AG04450 (cell line): ENCODE measurements at regions of chr4 and their contacts with region 1.

Region 1: GRCh38 chr4:6327041-6327917 is 57.6 kb downstream of the WFS1 start:
- DNase-seq: peak; percentile 27
- H3K4me3 ChIP-seq: no peak overlapping the region
- H3K27ac ChIP-seq: no peak overlapping the region
- H3K27me3 ChIP-seq: peaks cover 20% of the 10 kb centered on the region
- CTCF ChIP-seq: peak; percentile 91

Region 2: GRCh38 chr4:6269616-6270511 is 57.4 kb before region 1 on chr4 and contains the start of gene WFS1:
- CTCF ChIA-PET with region 1: interaction called, 310 read pairs
- POLR2A ChIA-PET with region 1: no interaction called
- DNase-seq: peak; percentile 95
- H3K4me3 ChIP-seq: peak within 1 kb of the TSS; percentile 82
- H3K27ac ChIP-seq: no peak within 1 kb of the TSS
- H3K27me3 ChIP-seq: peaks cover 11% of the 10 kb centered on the region
- CTCF ChIP-seq: no peak
- polyA plus RNA-seq, gene WFS1: 46.8 and 64.6 TPM in 2 replicates

Region 3: DNA sequence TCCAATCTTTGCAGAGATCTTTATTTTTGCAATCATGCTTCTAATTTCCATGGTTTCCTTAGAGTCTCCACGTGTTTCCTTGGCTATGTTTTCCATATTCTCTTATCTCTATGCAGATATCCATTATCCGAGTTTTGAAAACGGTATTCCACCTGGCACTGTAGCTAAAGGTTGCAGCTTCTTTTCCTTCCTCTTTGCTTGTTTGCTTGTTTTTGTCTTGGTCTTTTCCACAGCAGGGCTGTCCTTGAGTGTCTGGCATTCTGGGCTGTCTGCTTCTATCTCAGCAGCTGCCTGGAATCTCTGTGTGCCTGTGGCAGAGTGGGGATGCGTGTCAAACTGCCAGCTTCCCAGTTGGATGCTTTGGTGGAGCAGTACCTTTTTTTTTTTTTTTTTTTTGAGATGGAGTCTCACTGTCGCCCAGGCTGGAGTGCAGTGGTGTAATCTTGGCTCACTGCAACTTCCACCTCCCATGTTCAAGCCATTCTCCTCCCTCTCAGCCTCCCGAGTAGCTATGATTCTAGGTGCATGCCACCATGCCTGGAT is 10.7 kb before region 1 on chr4:
- CTCF ChIA-PET with region 1: interaction called, 16 read pairs
- POLR2A ChIA-PET with region 1: no interaction called
- DNase-seq: no peak
- H3K4me3 ChIP-seq: no peak overlapping the region
- H3K27ac ChIP-seq: no peak overlapping the region
- H3K27me3 ChIP-seq: peaks cover 20% of the 10 kb centered on the region
- CTCF ChIP-seq: no peak

Region 4: GRCh38 chr4:6343950-6344408 is 16.7 kb after region 1 on chr4:
- CTCF ChIA-PET with region 1: interaction called, 50 read pairs
- POLR2A ChIA-PET with region 1: no interaction called
- DNase-seq: peak; percentile 18
- H3K4me3 ChIP-seq: no peak overlapping the region
- H3K27ac ChIP-seq: no peak overlapping the region
- H3K27me3 ChIP-seq: peaks cover 3% of the 10 kb centered on the region
- CTCF ChIP-seq: no peak

Region 5: GRCh38 chr4:6354119-6354518 is 26.8 kb after region 1 on chr4:
- CTCF ChIA-PET with region 1: no interaction called
- POLR2A ChIA-PET with region 1: no interaction called
- DNase-seq: no peak
- H3K4me3 ChIP-seq: no peak overlapping the region
- H3K27ac ChIP-seq: no peak overlapping the region
- H3K27me3 ChIP-seq: no peaks in the 10 kb centered on the region
- CTCF ChIP-seq: no peak

Region 6: GRCh38 chr4:6546681-6547447 is 219.6 kb after region 1 on chr4:
- CTCF ChIA-PET with region 1: interaction called, 17 read pairs
- POLR2A ChIA-PET with region 1: no interaction called
- DNase-seq: peak; percentile 33
- H3K4me3 ChIP-seq: no peak overlapping the region
- H3K27ac ChIP-seq: no peak overlapping the region
- H3K27me3 ChIP-seq: peaks cover 3% of the 10 kb centered on the region
- CTCF ChIP-seq: peak; percentile 94